ENCODE measurements at regions of chr1 and their contacts with region 1.

Region 1: GRCh38 chr1:25037174-25038074 is 107.3 kb upstream of the RUNX3 start:
- DNase-seq: peak; percentile 64 to 70 (median 65)
- H3K4me3 ChIP-seq: no peak overlapping the region
- H3K4me3 Mint-ChIP-seq: peak overlapping the region in 7 of 8 donors; percentile 4 to 61 (median 43)
- H3K27ac ChIP-seq: no peak overlapping the region
- H3K27ac Mint-ChIP-seq: peak overlapping the region; percentile 22 to 91 (median 74)
- H3K4me1 ChIP-seq: peaks cover 56% of the 10 kb centered on the region
- H3K4me1 Mint-ChIP-seq: peaks cover 9 to 26% (median 21%) of the 10 kb centered on the region in 4 donors
- H3K27me3 ChIP-seq: no peaks in the 10 kb centered on the region
- H3K27me3 Mint-ChIP-seq: peaks cover 0 to 1% of the 10 kb centered on the region in 2 donors

Region 2: GRCh38 chr1:24847995-24848881 is 189.2 kb before region 1 on chr1:
- CTCF ChIA-PET with region 1: interaction called, 77 read pairs
- POLR2A ChIA-PET with region 1: interaction called, 26 read pairs
- intact Hi-C with region 1: loop called (anchors 1 kb)
- DNase-seq: peak; percentile 88 to 91 (median 89)
- H3K4me3 ChIP-seq: peak overlapping the region; percentile 18 to 73
- H3K4me3 Mint-ChIP-seq: peak overlapping the region; percentile 68 to 88 (median 78)
- H3K27ac ChIP-seq: peak overlapping the region; percentile 56
- H3K27ac Mint-ChIP-seq: peak overlapping the region; percentile 52 to 94 (median 81)
- H3K4me1 ChIP-seq: peaks cover 15% of the 10 kb centered on the region
- H3K4me1 Mint-ChIP-seq: peaks cover 7 to 22% (median 12%) of the 10 kb centered on the region in 4 donors
- H3K27me3 ChIP-seq: no peaks in the 10 kb centered on the region
- H3K27me3 Mint-ChIP-seq: no peaks in the 10 kb centered on the region

Region 3: GRCh38 chr1:24939040-24939674 is 98.3 kb before region 1 on chr1:
- CTCF ChIA-PET with region 1: interaction called, 296 read pairs
- POLR2A ChIA-PET with region 1: interaction called, 4 read pairs
- intact Hi-C with region 1: no loop called
- DNase-seq: no peak
- H3K4me3 ChIP-seq: no peak overlapping the region
- H3K4me3 Mint-ChIP-seq: no peak overlapping the region
- H3K27ac ChIP-seq: no peak overlapping the region
- H3K27ac Mint-ChIP-seq: no peak overlapping the region
- H3K4me1 ChIP-seq: peaks cover 15% of the 10 kb centered on the region
- H3K4me1 Mint-ChIP-seq: peaks cover 4 to 24% (median 11%) of the 10 kb centered on the region in 4 donors
- H3K27me3 ChIP-seq: no peaks in the 10 kb centered on the region
- H3K27me3 Mint-ChIP-seq: no peaks in the 10 kb centered on the region

Region 4: GRCh38 chr1:24964811-24965570 is 72.4 kb before region 1 on chr1:
- CTCF ChIA-PET with region 1: interaction called, 155 read pairs
- POLR2A ChIA-PET with region 1: interaction called, 36 read pairs
- intact Hi-C with region 1: loop called (anchors 1 kb)
- DNase-seq: peak; percentile 90 to 95 (median 93)
- H3K4me3 ChIP-seq: peak overlapping the region; percentile 46 to 69
- H3K4me3 Mint-ChIP-seq: peak overlapping the region; percentile 69 to 91 (median 84)
- H3K27ac ChIP-seq: peak overlapping the region; percentile 69
- H3K27ac Mint-ChIP-seq: peak overlapping the region; percentile 89 to 100 (median 96)
- H3K4me1 ChIP-seq: peaks cover 45% of the 10 kb centered on the region
- H3K4me1 Mint-ChIP-seq: peaks cover 16 to 73% (median 39%) of the 10 kb centered on the region in 4 donors
- H3K27me3 ChIP-seq: no peaks in the 10 kb centered on the region
- H3K27me3 Mint-ChIP-seq: peaks cover 0 to 2% of the 10 kb centered on the region in 2 donors

Region 5: GRCh38 chr1:24987875-24988557 is 49.4 kb before region 1 on chr1:
- CTCF ChIA-PET with region 1: interaction called, 15 read pairs
- POLR2A ChIA-PET with region 1: interaction called, 18 read pairs
- intact Hi-C with region 1: loop called (anchors 1 kb)
- DNase-seq: no peak
- H3K4me3 ChIP-seq: no peak overlapping the region
- H3K4me3 Mint-ChIP-seq: peak overlapping the region in 1 of 8 donors; percentile 36
- H3K27ac ChIP-seq: no peak overlapping the region
- H3K27ac Mint-ChIP-seq: peak overlapping the region in 4 of 7 donors; percentile 31 to 89 (median 60)
- H3K4me1 ChIP-seq: peaks cover 90% of the 10 kb centered on the region
- H3K4me1 Mint-ChIP-seq: peaks cover 65 to 91% (median 77%) of the 10 kb centered on the region in 4 donors
- H3K27me3 ChIP-seq: no peaks in the 10 kb centered on the region
- H3K27me3 Mint-ChIP-seq: peaks cover 0 to 2% of the 10 kb centered on the region in 2 donors

Region 6: DNA sequence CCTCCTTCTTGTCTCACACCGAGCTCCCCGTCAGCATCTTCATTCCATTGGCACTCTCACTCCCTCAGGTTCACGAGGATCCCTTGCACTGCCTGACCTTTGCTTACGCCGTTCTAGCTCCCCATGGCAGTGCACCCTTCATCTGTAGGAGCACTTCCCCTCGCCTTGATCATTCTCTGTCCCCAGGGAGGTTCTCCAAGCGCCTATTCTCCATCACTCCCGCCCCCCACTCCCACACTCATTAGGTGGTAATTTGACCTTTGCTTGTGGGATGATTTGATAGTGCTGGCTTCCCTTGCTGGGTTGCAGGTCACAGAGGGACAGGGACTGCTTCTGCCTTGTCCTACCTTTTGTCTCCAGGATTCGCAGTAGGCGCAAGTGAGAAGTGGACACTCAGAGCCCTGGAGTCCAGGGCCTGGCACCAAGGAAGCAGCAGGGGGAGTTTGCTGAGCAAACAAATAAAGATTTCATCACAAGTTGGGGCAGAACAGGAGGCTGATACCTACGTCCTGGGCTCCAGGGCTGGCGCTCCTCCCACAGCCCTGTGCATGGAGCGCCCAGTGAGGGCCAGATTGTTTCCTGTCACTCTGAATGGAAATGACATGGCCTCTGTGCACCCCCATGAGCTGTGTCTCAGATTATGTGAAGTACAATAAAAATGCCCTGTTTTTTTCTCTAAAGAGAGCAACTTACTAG is 25.3 kb before region 1 on chr1:
- CTCF ChIA-PET with region 1: interaction called, 23 read pairs
- POLR2A ChIA-PET with region 1: interaction called, 6 read pairs
- intact Hi-C with region 1: loop called (anchors 1 kb)
- DNase-seq: no peak
- H3K4me3 ChIP-seq: no peak overlapping the region
- H3K4me3 Mint-ChIP-seq: no peak overlapping the region
- H3K27ac ChIP-seq: no peak overlapping the region
- H3K27ac Mint-ChIP-seq: peak overlapping the region in 1 of 7 donors; percentile 14
- H3K4me1 ChIP-seq: peaks cover 20% of the 10 kb centered on the region
- H3K4me1 Mint-ChIP-seq: peaks cover 11 to 27% (median 19%) of the 10 kb centered on the region in 4 donors
- H3K27me3 ChIP-seq: no peaks in the 10 kb centered on the region
- H3K27me3 Mint-ChIP-seq: no peaks in the 10 kb centered on the region

Region 7: GRCh38 chr1:25048728-25049127 is 11.3 kb after region 1 on chr1:
- CTCF ChIA-PET with region 1: interaction called, 14 read pairs
- POLR2A ChIA-PET with region 1: no interaction called
- intact Hi-C with region 1: no loop called
- DNase-seq: no peak
- H3K4me3 ChIP-seq: no peak overlapping the region
- H3K4me3 Mint-ChIP-seq: no peak overlapping the region
- H3K27ac ChIP-seq: no peak overlapping the region
- H3K27ac Mint-ChIP-seq: no peak overlapping the region
- H3K4me1 ChIP-seq: no peaks in the 10 kb centered on the region
- H3K4me1 Mint-ChIP-seq: no peaks in the 10 kb centered on the region
- H3K27me3 ChIP-seq: no peaks in the 10 kb centered on the region
- H3K27me3 Mint-ChIP-seq: peaks cover 2 to 9% of the 10 kb centered on the region in 2 donors

Measured in CD4-positive, alpha-beta memory T cell (primary cell).